Head of caudate nucleus (tissue), 42 donors: ENCODE measurements at regions of chr2 and their contacts with region 1.

Region 1: DNA sequence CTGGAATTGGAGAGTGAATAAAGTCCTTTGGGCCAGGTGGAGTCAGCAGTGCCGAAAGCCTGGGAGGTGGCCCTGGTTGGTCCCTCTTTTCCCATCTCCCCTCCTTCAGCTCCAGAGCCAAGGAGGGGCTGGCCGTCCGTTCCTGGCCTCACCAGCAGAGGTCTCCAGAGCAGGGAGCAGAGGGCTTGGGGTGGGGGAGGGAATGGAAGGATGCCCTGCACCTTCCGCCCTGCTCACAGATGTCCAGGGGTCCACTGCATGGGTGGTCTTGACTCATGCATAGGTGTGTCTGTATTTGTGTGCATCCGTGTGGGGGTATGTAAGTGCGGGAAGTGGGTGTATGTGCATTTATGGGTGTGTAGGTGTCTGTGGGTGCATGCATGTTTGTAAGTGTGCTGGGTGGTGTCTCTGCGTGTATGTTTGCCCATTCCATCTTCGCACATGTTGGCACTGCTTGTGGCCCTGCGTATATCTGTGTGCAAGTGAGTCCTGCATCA is 201.8 kb downstream of the ZFP36L2 start:
- DNase-seq: peak; percentile 31 to 93 (median 79)

Region 2: GRCh38 chr2:42510608-42511243 is 513.8 kb before region 1 on chr2:
- intact Hi-C with region 1: no loop called
- DNase-seq: no peak

Region 3: GRCh38 chr2:42974721-42975717 is 49.5 kb before region 1 on chr2:
- intact Hi-C with region 1: loop called (anchors 2 kb)
- DNase-seq: peak; percentile 67 to 93 (median 84)

Region 4: GRCh38 chr2:43100883-43101662 is 76.5 kb after region 1 on chr2:
- intact Hi-C with region 1: loop called (anchors 5 kb)
- DNase-seq: peak; percentile 88 to 99 (median 95)